ENCODE measurements at regions of chr5 and their contacts with region 1.

Region 1: GRCh38 chr5:50800410-50800809 is 134.0 kb downstream of the PARP8 start:
- DNase-seq: no peak
- ATAC-seq: no peak
- H3K4me3 Mint-ChIP-seq: no peak overlapping the region
- H3K27ac Mint-ChIP-seq: no peak overlapping the region
- H3K4me1 Mint-ChIP-seq: no peaks in the 10 kb centered on the region
- H3K27me3 Mint-ChIP-seq: no peaks in the 10 kb centered on the region

Region 2: GRCh38 chr5:50853151-50853550 is 52.7 kb after region 1 on chr5:
- CTCF ChIA-PET with region 1: no interaction called
- POLR2A ChIA-PET with region 1: no interaction called
- intact Hi-C with region 1: loop called in 1 of 2 experiments (anchors 5 kb)
- DNase-seq: no peak
- ATAC-seq: no peak
- H3K4me3 Mint-ChIP-seq: no peak overlapping the region
- H3K27ac Mint-ChIP-seq: no peak overlapping the region
- H3K4me1 Mint-ChIP-seq: peaks cover 3% of the 10 kb centered on the region
- H3K27me3 Mint-ChIP-seq: peaks cover 4% of the 10 kb centered on the region

Region 3: DNA sequence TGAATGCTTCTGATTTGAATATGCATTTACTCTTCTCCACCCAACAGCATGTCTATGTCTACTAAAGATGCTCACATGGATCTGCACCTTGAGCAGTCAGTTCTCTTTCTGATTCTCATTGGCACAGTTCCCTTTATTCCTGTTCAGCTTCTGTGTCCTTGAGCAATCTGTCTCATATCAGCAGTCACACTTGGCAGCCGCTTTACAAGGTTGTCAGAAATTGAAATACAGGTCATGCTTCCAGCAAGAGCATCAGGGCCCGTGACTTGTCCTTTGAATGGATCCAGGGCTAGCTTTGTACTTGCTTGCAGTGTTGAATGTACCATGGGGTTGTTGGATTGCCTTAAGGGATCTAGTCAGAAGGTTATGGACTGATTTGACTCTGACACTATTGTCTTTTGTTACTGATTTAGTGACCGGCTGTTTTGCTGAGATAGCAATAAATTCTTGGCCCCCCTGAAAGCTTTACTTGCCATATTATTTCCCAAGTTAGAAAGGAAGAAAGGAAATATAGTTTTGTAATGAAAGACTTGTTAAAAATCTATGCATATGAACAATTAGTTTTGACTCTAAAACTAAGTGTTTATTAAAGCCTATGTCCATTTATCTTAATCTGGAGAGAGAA is 309.5 kb after region 1 on chr5:
- CTCF ChIA-PET with region 1: no interaction called
- POLR2A ChIA-PET with region 1: no interaction called
- intact Hi-C with region 1: no loop called
- DNase-seq: no peak
- ATAC-seq: no peak
- H3K4me3 Mint-ChIP-seq: no peak overlapping the region
- H3K27ac Mint-ChIP-seq: no peak overlapping the region
- H3K4me1 Mint-ChIP-seq: no peaks in the 10 kb centered on the region
- H3K27me3 Mint-ChIP-seq: no peaks in the 10 kb centered on the region